Right ventricle myocardium superior (tissue), 1 donor: ENCODE measurements at regions of chr11 and their contacts with region 1.

Region 1: GRCh38 chr11:67507864-67508485 is at the start of gene CDK2AP2:
- DNase-seq: peak; percentile 100
- ATAC-seq: peak; percentile 85
- total RNA-seq, gene CDK2AP2: 57.8 TPM

Region 2: DNA sequence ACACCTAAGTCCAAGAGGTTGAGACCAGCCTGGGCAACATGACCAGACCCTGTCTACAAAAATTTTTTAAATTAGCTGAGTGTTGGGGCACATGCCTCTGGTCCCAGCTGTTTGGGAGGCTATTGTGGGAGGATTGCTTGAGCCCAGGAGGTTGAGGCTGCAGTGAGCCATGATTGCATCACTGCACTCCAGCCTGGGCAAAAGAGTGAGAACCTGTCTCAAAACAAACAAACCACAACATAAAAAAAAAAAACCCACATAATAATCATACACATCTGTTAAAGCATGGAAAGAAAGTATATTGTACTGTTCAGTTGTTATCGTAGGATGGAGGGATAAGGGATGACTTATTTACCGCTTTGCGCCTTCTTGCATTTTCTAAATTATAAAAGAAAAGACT is 277.6 kb before region 1 on chr11:
- intact Hi-C with region 1: no loop called
- DNase-seq: no peak
- ATAC-seq: no peak

Region 3: DNA sequence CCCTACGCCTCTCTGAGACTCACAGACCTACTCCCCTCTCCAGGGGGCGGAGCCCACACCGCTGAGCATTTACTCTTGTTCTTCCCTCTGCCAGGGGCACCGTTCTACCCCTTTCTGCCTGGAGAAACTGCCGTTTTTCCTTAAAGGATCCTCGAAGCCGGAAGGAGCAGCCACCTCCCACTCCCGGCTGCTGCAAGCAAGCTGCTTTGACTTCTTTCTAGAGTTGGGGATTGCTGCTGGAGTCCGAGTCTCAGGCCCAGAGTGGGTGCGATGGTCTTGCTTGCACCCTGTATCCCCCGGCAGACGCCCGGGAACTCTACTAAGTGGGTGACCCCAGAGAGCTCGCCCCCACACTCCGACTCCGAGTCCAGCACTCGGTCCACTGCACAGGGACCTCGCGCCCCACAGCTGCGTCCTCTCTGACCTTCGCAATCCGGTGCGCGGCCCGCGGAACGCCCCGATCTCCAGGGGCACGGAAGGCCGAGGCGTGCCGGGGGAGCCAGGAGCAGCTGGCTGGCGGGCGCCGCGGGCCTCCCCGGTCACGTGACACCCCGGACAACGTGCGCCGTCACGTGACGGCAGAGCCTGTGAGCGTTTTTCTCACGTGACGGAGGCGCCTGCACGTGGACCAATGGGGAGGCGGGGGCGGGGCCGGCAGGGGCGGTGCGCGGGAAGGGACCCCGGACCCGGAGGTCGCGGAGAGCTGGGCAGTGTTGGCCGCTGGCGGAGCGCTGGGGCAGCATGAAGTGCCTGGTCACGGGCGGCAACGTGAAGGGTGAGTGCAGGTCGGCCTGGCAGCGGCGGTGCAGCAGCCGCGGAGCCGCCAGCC is 116.5 kb before region 1 on chr11 and contains the start of gene RAD9A:
- intact Hi-C with region 1: loop called (anchors 5 kb)
- DNase-seq: peak; percentile 98
- ATAC-seq: peak; percentile 93
- total RNA-seq, gene RAD9A: 5.7 TPM